AG04449 (cell line): ENCODE measurements at regions of chr12 and their contacts with region 1.

Region 1: DNA sequence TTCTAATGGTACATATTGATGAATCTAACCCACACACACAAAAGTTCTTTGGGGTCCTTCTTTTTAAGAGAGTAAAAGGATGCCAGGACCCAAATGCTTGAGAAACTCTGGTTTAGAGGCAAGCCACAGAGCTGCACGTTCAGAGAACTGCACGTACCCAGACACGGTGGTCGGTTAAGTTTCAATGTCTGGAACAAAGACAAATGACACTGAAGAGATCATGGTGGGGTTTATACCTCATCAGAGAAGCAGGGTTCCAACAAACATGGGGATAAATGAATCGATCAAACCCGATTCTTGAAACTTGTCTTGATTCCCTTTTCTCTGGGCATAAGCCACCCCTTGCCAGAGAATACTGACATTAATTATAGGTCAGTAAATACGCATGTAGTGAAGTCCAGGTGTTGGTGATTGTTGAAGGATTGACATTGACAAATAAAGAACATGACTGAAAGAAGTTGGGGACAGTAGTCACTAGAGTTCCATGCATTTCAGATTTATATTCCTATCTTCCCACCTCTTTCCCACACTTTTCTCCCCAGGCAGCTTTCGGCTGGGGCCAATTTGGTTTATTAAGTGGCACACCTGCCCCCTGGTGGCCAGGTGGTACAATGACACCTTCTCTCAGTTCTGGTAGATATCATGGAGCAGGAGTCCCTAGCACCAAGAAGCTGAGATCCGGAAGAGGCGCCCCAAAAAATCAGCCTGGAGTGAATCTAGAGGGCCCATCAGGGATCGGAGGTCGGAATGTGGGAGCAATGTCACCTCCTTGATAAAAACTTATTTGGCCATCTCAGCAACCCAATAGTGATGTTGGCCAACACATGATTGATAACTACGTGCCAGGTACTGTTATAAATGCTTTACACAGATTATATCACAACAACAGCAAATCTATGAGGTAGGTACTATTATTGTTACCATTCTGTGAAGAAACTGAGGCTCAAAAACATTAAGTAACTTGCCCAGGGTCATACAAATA is 17.8 kb upstream of the HDAC7 start:
- DNase-seq: no peak
- H3K4me3 ChIP-seq: no peak overlapping the region
- CTCF ChIP-seq: peak; percentile 80

Region 2: DNA sequence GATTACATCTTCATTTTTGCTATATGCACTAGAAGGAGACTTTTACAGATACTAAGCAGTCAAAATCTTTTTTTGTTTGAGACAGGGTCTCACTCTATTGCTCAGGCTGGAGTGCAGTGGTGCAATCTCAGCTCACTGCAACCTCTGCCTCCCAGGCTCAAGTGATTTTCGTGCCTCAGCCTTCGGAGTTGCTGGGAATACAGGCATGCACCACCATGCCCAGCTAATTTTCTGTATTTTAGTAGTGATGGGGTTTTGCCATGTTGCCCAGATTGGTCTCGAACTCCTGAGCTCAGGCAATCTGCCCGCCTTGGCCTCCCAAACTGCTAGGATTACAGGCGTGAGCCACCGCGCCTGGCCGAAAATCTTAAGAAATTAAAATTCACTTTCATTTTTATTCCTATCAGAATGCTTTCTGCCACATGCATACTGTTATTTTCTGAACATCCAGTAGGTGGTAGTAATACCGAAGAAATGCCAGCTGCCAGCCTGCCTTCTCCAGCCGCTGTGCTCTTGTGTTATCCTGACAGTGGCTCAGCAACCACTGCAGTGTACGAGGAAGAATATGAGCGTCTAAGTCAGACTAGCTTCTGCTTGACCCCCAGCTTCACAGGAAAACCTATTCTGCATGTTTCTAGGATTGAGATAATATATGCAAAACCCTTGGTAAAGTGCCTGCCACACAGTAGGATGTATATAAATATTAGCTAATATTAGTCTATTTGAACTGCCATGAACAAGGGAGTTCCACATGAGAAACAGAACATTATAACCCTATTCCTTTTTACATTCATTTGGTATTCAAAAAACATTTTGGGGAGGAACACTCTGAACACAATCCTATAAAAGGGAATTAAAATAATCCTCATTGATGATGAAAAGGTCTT is 185.9 kb before region 1 on chr12:
- CTCF ChIA-PET with region 1: interaction called, 10 read pairs
- POLR2A ChIA-PET with region 1: no interaction called
- DNase-seq: peak; percentile 4
- H3K4me3 ChIP-seq: no peak overlapping the region
- CTCF ChIP-seq: peak; percentile 44

Region 3: DNA sequence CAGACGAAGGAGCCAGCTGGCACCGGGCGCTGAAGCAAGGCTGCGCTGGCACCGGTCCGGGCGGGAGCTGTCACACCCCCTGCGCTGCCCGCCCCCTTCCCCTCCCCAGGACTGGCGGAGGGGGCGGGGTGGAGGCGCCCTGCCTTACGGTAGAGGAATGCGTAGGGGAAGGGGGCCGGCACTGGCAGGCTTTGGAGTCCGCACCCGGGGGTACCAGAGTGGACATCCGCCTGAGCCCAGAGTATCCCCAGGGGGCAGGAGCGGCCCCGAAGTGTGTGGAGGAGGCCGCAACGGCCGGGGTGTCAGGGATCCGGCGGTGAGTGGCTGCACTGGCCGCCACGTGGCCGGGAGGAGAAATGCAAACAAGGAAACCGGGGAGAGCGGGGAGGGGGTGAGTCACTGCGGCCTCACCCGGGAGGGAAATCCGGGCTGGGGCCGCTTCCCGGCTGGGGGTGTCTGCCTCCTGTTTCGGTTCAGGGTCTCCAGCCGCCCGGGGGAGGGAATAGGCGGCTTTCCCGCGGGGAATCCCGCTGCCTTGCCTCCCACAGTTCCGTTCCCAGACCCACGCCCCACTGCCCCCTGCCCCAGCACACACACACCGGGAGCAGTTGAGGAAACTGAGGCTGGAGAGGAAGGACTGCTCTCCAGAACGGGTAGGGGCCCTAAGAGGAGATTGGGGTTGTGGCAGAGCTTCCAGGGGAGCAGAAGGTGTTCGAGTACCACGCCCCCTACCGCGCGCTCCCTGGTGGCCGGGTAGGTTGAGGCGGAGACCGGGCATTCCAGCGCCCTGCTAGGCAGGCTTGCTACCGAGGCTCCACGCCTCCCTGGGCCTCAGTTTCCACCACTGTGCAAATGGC is 78.4 kb before region 1 on chr12 and contains the start of gene RAPGEF3:
- CTCF ChIA-PET with region 1: interaction called, 21 read pairs
- POLR2A ChIA-PET with region 1: no interaction called
- DNase-seq: no peak
- H3K4me3 ChIP-seq: peak within 1 kb of the TSS; percentile 68
- CTCF ChIP-seq: peak; percentile 71

Region 4: DNA sequence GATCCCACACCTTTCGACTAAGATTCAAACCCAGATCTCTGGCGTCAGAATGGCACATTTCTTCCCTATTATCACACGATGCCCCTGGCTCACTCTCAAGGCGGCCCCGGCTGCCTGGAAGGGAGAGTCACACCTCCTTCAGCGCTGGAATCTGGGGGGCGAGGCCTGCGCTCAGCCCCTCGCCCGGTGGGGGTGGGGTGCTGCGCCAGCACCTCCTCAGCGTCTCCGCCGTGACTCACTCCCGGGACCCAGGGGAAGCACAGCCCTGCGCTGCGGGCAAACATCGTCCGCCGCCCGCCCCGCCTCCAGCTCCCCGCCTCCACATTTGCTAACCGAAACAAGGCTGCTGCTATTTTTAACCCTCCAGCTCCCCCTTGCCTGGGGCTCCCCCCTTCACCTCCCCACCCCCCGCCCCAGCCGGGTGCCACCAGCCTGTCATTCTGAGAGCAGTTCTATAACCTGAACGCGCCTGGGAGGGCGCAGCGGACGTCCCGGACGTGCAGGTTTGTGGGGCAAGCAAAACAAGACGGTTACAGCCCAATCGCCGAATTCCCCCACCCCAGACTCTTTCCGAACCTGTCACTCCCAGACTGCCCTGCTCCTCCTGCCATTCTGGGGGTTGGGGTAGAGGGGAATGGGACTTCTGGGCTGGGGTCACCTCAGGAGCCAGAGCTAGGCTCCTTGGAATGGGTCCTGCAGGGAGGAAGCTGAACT is 24.5 kb before region 1 on chr12:
- CTCF ChIA-PET with region 1: interaction called, 751 read pairs
- POLR2A ChIA-PET with region 1: interaction called, 3 read pairs
- DNase-seq: peak; percentile 53
- H3K4me3 ChIP-seq: peak overlapping the region; percentile 48
- CTCF ChIP-seq: no peak

Region 5: GRCh38 chr12:47870175-47870781 is 32.8 kb after region 1 on chr12:
- CTCF ChIA-PET with region 1: interaction called, 20 read pairs
- POLR2A ChIA-PET with region 1: no interaction called
- DNase-seq: no peak
- H3K4me3 ChIP-seq: no peak overlapping the region
- CTCF ChIP-seq: peak; percentile 46

Region 6: GRCh38 chr12:47909834-47910465 is 72.5 kb after region 1 on chr12:
- CTCF ChIA-PET with region 1: no interaction called
- POLR2A ChIA-PET with region 1: no interaction called
- DNase-seq: no peak
- H3K4me3 ChIP-seq: no peak overlapping the region
- CTCF ChIP-seq: no peak

Region 7: DNA sequence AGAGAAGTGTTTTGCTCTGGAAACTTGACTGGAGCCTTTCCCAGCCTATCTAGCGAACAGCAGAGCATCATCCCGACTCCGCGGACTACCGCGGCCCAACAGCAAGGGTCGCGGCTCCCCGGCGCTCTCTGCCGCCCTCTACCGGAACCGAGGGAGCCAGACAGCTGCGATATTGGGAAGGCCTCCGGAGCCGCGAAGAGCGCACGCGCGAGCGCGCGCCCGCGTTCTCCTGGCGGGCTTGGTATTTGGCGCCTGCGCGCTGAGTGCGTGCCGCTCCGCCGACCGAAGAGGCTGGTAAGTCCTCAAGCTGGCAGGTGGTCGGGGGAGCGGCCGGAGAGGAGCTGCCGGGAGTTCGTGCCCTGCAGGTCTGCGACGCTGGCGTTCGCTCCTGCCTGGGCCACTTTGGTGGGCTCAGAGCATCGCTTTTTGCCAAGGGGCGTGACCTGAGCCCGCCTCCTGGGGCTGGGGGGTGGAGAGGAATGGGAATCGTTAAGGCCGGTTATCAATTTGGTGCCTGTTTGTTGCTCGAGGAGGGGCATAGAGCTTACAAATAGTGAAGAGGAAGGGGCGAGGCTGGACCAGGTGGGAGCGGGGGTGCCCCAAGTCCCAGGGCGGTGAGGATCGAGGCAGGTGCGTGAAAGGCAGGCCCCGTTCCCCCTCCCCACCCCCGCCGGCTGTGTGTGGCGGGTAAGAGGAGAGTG is 126.0 kb after region 1 on chr12 and contains the start of gene TMEM106C:
- CTCF ChIA-PET with region 1: interaction called, 43 read pairs
- POLR2A ChIA-PET with region 1: no interaction called
- DNase-seq: peak; percentile 38
- H3K4me3 ChIP-seq: peak within 1 kb of the TSS; percentile 97
- CTCF ChIP-seq: peak; percentile 99